ENCODE measurements at regions of chr5 and their contacts with region 1.

Region 1: GRCh38 chr5:6585168-6585567 is 47.7 kb downstream of the NSUN2 start:
- DNase-seq: no peak
- ATAC-seq: no peak

Region 2: DNA sequence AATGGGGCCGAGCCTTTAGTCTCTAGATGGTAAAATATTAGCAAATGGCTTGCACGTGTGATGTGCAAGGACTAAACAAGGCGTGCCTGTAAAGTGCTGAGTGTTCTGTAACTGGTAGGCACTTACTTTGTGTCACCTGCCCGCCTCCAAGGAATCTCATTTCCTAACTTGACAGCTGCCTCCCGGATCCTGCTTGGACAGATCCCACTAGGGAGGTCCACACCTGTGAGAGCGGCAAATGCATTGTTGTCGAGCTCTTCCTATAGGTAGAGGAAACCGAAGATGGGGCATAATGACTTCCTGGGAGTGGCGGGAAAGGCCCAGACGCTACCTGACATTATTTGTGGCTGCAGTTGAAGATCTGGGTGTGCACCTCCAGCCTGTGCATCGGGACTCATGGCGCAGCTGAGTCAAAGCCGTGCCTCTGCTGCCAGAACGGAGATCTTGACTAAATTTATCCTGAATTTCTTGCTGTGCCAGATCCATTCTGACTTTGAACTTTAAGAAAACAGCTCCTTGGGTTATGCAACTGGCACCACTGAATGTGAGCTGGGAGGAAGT is 207.8 kb after region 1 on chr5:
- intact Hi-C with region 1: loop called (anchors 5 kb)
- DNase-seq: no peak
- ATAC-seq: no peak